ENCODE measurements at regions of chr5 and their contacts with region 1.

Region 1: GRCh38 chr5:5544094-5544663 is 121.7 kb downstream of the ICE1 start:
- DNase-seq: no peak
- H3K4me3 ChIP-seq: no peak overlapping the region
- H3K27ac ChIP-seq: no peak overlapping the region
- H3K4me1 ChIP-seq: no peaks in the 10 kb centered on the region
- H3K27me3 ChIP-seq: no peaks in the 10 kb centered on the region
- CTCF ChIP-seq: no peak
- POLR2A ChIP-seq: no peak

Region 2: DNA sequence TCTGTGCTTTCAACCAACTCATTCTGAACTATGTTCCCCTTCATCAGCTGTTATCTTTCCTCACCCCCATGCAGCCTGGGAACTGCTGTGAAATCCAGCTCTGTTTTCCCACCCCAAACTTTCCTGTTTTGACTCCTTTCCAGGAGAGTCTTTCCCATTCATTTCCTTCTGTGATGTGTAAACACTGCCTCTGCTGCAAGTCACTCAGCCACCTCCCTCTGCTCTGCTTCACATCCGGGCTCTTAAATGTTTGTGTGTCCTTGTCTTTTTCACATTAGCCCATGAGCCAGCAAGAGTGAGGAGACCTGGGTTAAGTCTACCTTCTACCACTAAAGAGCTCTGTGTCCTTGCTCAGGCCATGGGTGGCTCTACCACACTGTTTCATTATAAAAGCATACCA is 15.8 kb after region 1 on chr5:
- intact Hi-C with region 1: loop called (anchors 1 kb)
- DNase-seq: no peak
- H3K4me3 ChIP-seq: no peak overlapping the region
- H3K27ac ChIP-seq: no peak overlapping the region
- H3K4me1 ChIP-seq: no peaks in the 10 kb centered on the region
- H3K27me3 ChIP-seq: no peaks in the 10 kb centered on the region
- CTCF ChIP-seq: no peak
- POLR2A ChIP-seq: no peak

Measured in breast epithelium (tissue), 4 donors.